Left cardiac atrium (tissue), 4 donors: ENCODE measurements at regions of chr1 and their contacts with region 1.

Region 1: GRCh38 chr1:29124366-29125236 is 898 bp upstream of the TMEM200B start:
- DNase-seq: peak; percentile 85
- ATAC-seq: peak; percentile 74 to 75

Region 2: GRCh38 chr1:29181413-29182225 is 57.0 kb after region 1 on chr1 and contains the start of gene SRSF4:
- intact Hi-C with region 1: loop called in 1 of 2 experiments (anchors 5 kb)
- DNase-seq: peak; percentile 100
- ATAC-seq: peak; percentile 96 to 97
- total RNA-seq, gene SRSF4: 50.1 to 63.9 TPM